ENCODE measurements at regions of chr17 and their contacts with region 1.

Region 1: DNA sequence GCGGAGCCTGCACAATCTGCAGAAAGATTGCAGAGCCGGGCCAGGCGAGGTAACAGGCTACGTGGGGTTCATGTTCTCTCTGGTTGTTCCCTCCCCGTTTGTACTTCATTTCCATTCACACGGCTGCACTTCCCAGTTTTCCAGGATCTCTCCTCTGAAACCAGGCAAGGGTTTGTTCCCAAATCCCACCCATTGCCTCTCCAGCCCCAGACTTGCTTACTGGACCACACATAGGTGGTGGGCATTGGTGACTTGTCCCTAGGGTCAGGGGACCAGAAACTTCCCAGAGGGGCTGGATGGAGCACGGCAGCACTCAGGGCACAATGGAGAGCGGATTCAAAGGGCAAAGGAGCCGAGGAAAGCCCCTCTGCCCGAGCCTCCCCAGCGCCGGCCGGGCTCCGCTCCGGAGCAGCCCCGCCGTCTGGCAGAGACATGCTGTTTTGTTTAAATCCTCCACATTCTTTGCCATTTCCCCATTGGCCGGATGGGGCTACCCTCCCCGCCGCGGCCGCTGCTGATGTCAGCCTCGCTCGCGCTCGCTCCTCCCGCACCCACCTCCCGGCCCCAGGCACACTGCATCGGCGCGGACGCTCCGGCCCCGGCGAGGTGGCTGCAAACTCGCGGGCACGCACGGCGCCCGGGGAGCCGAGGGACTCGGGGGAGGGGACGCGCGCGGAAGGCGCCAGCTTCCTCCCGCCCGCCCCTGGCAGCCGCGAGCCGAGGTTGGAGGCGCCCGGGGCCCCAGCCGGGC is at the start of gene PITPNC1:
- DNase-seq: peak; percentile 90
- CTCF ChIP-seq: no peak

Region 2: DNA sequence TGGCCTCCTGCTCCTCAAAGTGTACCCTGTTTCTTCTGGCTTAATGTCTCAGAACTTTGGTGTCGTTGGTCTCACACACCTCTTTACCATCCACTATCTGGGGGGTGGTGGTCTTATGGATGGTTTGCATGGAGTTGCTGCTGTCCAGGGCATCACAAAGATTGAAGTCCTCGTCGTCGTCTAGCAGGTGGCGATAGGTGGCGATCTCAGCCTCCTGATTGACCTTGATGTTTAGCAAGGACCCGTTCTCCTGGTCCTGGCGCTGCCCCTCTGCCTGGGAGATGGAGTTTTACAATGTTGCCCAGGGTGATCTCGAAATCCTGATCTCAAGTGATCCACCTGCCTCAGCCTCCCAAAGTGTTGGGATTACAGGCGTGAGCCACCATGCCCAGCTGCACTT is 100.8 kb before region 1 on chr17:
- in situ Hi-C with region 1: no loop called
- DNase-seq: no peak
- CTCF ChIP-seq: no peak

Region 3: DNA sequence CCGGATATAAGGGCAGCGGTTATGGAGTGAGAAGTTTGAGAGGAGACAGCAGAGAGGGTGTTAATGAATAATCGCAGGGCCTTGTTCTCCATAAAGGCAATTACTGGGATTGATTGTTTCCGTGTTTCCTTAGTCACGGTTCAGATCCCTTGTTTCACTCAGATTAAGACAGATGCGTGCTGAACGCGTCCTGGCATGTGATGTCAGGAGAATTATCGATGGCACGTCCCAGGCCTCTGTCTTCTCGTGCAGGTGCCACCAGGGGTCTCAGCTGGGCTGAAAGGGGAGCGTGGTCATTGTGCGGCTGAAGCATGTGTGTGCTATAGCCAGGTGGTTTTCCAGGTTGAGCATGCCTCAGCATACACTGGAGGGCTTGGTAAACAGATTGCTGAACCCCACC is 198.4 kb after region 1 on chr17:
- in situ Hi-C with region 1: loop called (anchors 25 kb)
- DNase-seq: peak; percentile 40
- CTCF ChIP-seq: peak; percentile 54

Region 4: DNA sequence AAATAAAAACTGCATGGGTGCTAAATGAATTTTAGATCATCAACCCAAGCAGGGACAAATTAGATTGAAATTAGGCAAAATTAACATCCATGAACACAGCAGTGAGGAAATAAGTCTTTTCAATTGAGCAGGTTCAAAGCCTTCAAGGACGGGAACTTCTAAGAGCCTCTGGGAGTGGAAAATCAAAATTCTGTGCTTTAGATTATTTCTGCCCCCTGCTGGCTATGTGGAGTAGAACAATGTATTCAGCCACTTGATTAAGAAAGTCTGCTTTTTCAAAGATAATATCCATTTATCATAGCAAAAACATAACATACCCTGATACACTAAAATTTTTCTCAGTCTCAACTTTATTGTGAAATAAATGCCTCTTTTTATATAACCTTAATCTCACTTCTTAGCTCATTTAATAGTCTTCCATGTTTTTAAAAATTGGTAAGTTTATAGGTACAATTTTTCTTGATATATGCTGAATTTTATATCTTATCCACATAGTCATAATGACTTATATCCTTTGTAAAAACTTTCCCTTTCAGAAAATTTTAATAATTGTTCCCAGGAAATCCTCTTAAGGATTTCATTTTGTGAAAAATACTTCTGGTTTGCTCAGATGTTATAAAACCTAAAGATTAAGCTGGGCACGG is 312.7 kb after region 1 on chr17:
- in situ Hi-C with region 1: loop called (anchors 10 kb)
- DNase-seq: peak; percentile 82
- CTCF ChIP-seq: peak; percentile 72